Activated CD4-positive, alpha-beta T cell treated with anti-CD3 and anti-CD28 coated beads, Interleukin-2, amount 10 ng/mL, durations not matched to agents 24 days and 14 days (primary cell): ENCODE measurements at regions of chr1 and their contacts with region 1.

Region 1: GRCh38 chr1:160342953-160343869 is at the starts of genes COPA and NCSTN:
- DNase-seq: peak; percentile 97
- H3K4me3 Mint-ChIP-seq: peak within 1 kb of the TSS; percentile 96
- H3K27ac Mint-ChIP-seq: peak within 1 kb of the TSS; percentile 97
- H3K4me1 Mint-ChIP-seq: peaks cover 41% of the 10 kb centered on the region
- H3K27me3 Mint-ChIP-seq: no peaks in the 10 kb centered on the region
- total RNA-seq, gene COPA: 116 and 125 TPM in 2 replicates
- total RNA-seq, gene NCSTN: 73.6 and 81.1 TPM in 2 replicates

Region 2: GRCh38 chr1:160284782-160285344 is 58.3 kb before region 1 on chr1 and contains the start of gene PEX19:
- intact Hi-C with region 1: loop called (anchors 1 kb)
- DNase-seq: peak; percentile 99
- H3K4me3 Mint-ChIP-seq: peak within 1 kb of the TSS; percentile 100
- H3K27ac Mint-ChIP-seq: peak within 1 kb of the TSS; percentile 90
- H3K4me1 Mint-ChIP-seq: peaks cover 21% of the 10 kb centered on the region
- H3K27me3 Mint-ChIP-seq: no peaks in the 10 kb centered on the region
- total RNA-seq, gene PEX19: 51.8 and 60.2 TPM in 2 replicates

Region 3: DNA sequence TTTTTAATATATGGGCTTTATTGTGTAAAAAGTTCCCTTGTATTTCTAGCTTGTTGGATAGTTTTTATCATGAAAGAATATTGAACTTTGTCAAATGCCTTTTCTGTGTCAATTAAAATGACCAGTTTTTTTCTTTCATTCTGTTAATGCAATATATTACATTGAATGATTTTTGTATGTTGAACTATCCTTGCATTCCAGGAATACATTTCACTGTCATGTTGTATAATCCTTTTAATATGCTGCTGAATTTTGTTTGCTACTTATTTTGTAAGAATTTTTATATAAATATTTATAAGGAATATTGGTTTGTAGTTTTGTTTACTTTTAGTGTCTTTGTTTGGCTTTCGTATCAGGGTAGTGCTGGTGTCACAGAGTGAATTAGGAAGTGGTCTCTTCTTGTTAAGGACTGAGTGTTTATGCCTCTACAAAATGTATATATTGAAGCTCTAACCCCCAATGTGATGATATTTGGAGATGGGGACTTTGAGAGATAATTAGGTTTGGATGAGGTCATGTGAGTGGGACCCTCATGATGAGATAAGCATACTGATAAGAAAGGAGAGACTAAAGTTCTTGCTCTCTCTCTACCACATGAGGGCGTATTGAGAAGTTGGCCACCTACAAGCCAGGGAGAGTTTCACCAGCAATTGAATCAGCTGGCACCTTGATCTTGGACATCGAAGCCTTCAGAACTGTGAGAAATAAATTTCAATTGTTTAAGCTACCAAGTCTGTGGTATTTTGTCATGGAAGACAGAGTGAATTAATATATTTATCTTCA is 191.8 kb after region 1 on chr1:
- intact Hi-C with region 1: no loop called
- DNase-seq: no peak
- H3K4me3 Mint-ChIP-seq: no peak overlapping the region
- H3K27ac Mint-ChIP-seq: no peak overlapping the region
- H3K4me1 Mint-ChIP-seq: peaks cover 17% of the 10 kb centered on the region
- H3K27me3 Mint-ChIP-seq: no peaks in the 10 kb centered on the region

Region 4: GRCh38 chr1:160614410-160614809 is 271.2 kb after region 1 on chr1:
- intact Hi-C with region 1: loop called (anchors 5 kb)
- DNase-seq: no peak
- H3K4me3 Mint-ChIP-seq: no peak overlapping the region
- H3K27ac Mint-ChIP-seq: no peak overlapping the region
- H3K4me1 Mint-ChIP-seq: peaks cover 46% of the 10 kb centered on the region
- H3K27me3 Mint-ChIP-seq: no peaks in the 10 kb centered on the region

Region 5: GRCh38 chr1:160844447-160845232 is 501.4 kb after region 1 on chr1:
- intact Hi-C with region 1: no loop called
- DNase-seq: no peak
- H3K4me3 Mint-ChIP-seq: no peak overlapping the region
- H3K27ac Mint-ChIP-seq: no peak overlapping the region
- H3K4me1 Mint-ChIP-seq: peaks cover 5% of the 10 kb centered on the region
- H3K27me3 Mint-ChIP-seq: peaks cover 15% of the 10 kb centered on the region